ENCODE measurements at regions of chr1 and their contacts with region 1.

Region 1: DNA sequence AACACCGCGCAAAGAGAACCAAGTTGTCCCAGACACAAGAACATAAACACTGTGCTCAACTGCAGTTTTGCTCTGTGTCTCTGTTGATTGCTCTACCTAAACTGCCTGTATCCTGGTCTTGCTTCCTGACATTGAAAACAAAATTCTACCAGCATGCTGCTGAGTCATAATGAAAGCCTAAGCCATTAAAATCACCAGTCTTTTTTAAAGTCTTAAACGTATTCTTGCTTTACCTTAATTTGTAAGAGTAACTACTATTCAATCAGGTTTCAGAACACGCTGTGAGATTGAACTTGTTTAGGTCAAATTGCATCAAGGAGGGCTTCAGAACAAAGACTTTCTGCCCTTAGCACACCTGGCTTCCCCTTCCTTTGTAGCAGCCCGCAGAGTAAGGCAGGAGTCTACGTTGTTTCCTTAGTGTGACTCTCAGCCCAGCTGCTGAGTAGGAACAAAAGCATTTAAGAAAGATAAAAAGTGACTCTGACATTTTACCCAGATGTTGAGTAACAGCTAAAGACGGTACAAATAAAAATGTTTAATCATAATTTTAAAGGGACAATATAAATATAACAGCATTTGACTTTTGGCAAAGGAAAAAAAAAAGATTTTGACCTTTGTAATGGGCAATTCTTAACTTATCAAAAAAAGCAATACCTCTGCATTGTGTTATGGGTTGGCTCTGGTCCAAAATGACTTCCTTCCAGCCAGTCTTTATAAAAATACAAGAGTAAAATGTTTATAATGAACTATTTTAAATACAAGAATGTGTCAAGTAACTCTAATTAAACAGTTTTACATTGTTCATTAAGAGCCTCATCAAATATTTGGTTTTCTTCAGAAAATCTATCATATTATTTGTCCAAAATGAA is 186.9 kb upstream of the ADGRL4 start:
- DNase-seq: peak; percentile 74
- H3K4me3 ChIP-seq: no peak overlapping the region
- H3K27ac ChIP-seq: peak overlapping the region; percentile 69
- H3K27me3 ChIP-seq: no peaks in the 10 kb centered on the region
- CTCF ChIP-seq: no peak

Region 2: GRCh38 chr1:78839704-78840277 is 353.7 kb before region 1 on chr1:
- in situ Hi-C with region 1: loop called (anchors 25 kb)
- DNase-seq: peak; percentile 44
- H3K4me3 ChIP-seq: no peak overlapping the region
- H3K27ac ChIP-seq: no peak overlapping the region
- H3K27me3 ChIP-seq: no peaks in the 10 kb centered on the region
- CTCF ChIP-seq: peak; percentile 51

Region 3: GRCh38 chr1:78987042-78987441 is 206.4 kb before region 1 on chr1:
- in situ Hi-C with region 1: no loop called
- DNase-seq: no peak
- H3K4me3 ChIP-seq: no peak overlapping the region
- H3K27ac ChIP-seq: no peak overlapping the region
- H3K27me3 ChIP-seq: no peaks in the 10 kb centered on the region
- CTCF ChIP-seq: no peak

Region 4: DNA sequence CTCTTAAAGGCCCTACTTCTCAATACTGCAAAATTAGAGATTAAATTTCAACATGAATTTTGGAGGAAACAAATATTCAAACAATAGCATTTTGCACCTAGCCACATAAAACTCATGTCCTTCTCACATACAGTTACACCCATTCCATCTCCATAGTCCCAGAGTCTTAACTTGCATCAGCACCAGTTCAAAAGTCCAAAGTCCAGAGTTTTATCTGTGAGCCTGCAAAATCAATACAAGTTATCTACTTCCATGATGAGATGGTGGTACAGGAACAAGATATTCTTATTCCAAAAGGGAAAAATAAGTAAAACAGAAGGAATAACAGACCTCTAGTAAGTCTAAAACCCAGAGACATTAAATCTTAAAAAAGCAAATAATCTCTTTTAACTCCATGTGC is 499.1 kb after region 1 on chr1:
- in situ Hi-C with region 1: no loop called
- DNase-seq: no peak
- H3K4me3 ChIP-seq: no peak overlapping the region
- H3K27ac ChIP-seq: no peak overlapping the region
- H3K27me3 ChIP-seq: no peaks in the 10 kb centered on the region
- CTCF ChIP-seq: no peak

Measured in brain microvascular endothelial cell (primary cell).